PC-9 (cell line): ENCODE measurements at regions of chr2 and their contacts with region 1.

Region 1: GRCh38 chr2:138744713-138745112 is 35.5 kb downstream of the NXPH2 start:
- DNase-seq: no peak
- H3K4me3 ChIP-seq: no peak overlapping the region
- H3K27ac ChIP-seq: no peak overlapping the region
- H3K4me1 ChIP-seq: no peaks in the 10 kb centered on the region
- H3K27me3 ChIP-seq: no peaks in the 10 kb centered on the region
- CTCF ChIP-seq: no peak

Region 2: GRCh38 chr2:138170485-138170884 is 574.2 kb before region 1 on chr2:
- CTCF ChIA-PET with region 1: no interaction called
- POLR2A ChIA-PET with region 1: interaction called, 51 read pairs
- intact Hi-C with region 1: no loop called
- DNase-seq: no peak
- H3K4me3 ChIP-seq: no peak overlapping the region
- H3K27ac ChIP-seq: no peak overlapping the region
- H3K4me1 ChIP-seq: no peaks in the 10 kb centered on the region
- H3K27me3 ChIP-seq: no peaks in the 10 kb centered on the region
- CTCF ChIP-seq: no peak

Region 3: DNA sequence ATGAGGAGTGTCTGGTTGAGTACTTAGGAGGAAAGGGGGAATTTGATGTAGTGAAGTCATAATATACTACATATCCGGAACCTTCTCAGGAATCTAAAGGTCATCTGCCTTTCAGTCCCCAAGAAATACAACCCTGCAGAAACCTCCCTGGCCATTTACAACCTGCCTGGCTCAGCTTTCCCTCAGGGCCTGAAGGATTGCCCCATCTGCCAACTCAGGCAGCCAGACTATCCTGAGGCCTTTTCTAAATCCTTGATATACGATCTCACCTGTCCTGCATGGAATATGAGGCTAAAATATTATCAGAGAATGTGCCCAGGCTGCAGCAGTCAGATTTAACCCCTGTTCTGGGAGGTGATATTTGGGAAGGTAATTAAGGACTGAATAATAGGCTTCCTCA is 408.5 kb before region 1 on chr2:
- CTCF ChIA-PET with region 1: no interaction called
- POLR2A ChIA-PET with region 1: no interaction called
- intact Hi-C with region 1: no loop called
- DNase-seq: no peak
- H3K4me3 ChIP-seq: no peak overlapping the region
- H3K27ac ChIP-seq: no peak overlapping the region
- H3K4me1 ChIP-seq: no peaks in the 10 kb centered on the region
- H3K27me3 ChIP-seq: no peaks in the 10 kb centered on the region
- CTCF ChIP-seq: no peak

Region 4: GRCh38 chr2:138665937-138666336 is 78.8 kb before region 1 on chr2:
- CTCF ChIA-PET with region 1: no interaction called
- POLR2A ChIA-PET with region 1: no interaction called
- intact Hi-C with region 1: no loop called
- DNase-seq: no peak
- H3K4me3 ChIP-seq: no peak overlapping the region
- H3K27ac ChIP-seq: no peak overlapping the region
- H3K4me1 ChIP-seq: no peaks in the 10 kb centered on the region
- H3K27me3 ChIP-seq: no peaks in the 10 kb centered on the region
- CTCF ChIP-seq: no peak

Region 5: GRCh38 chr2:138767101-138767500 is 22.4 kb after region 1 on chr2:
- CTCF ChIA-PET with region 1: no interaction called
- POLR2A ChIA-PET with region 1: no interaction called
- intact Hi-C with region 1: no loop called
- DNase-seq: no peak
- H3K4me3 ChIP-seq: no peak overlapping the region
- H3K27ac ChIP-seq: no peak overlapping the region
- H3K4me1 ChIP-seq: no peaks in the 10 kb centered on the region
- H3K27me3 ChIP-seq: no peaks in the 10 kb centered on the region
- CTCF ChIP-seq: no peak

Region 6: GRCh38 chr2:138779781-138780445 is 35.2 kb after region 1 on chr2 and contains the start of gene NXPH2:
- CTCF ChIA-PET with region 1: no interaction called
- POLR2A ChIA-PET with region 1: no interaction called
- intact Hi-C with region 1: no loop called
- DNase-seq: no peak
- H3K4me3 ChIP-seq: no peak within 1 kb of the TSS
- H3K27ac ChIP-seq: no peak within 1 kb of the TSS
- H3K4me1 ChIP-seq: no peaks in the 10 kb centered on the region
- H3K27me3 ChIP-seq: no peaks in the 10 kb centered on the region
- CTCF ChIP-seq: no peak
- total RNA-seq, gene NXPH2: not detected in 2 replicates